Right lobe of liver (tissue), 6 donors: ENCODE measurements at regions of chr6 and their contacts with region 1.

Region 1: DNA sequence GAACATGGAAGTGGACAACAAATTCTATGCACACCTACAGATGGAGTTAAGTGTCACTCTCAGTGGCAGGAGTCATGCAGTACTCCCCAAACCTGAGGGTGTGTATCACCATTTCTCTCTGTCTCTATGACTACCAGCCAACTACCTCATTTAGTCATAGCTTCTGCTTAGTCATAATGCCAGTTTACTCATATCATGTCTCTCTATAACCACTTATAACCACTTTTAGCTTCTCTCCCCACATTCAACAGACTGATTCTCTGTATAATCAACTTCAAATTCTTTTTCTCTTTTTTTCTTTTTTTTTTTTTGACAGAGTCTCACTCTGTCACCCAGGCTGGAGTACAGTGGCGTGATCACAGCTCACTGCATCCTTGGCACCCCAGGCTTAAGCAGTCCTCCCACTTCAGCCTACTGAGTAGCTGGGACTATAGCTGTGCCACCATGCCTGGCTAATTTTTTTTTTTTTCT is 13.8 kb upstream of the GTF3C6 start:
- DNase-seq: no peak
- ATAC-seq: peak in 3 of 4 donors; percentile 12 to 87 (median 38)
- H3K4me3 ChIP-seq: no peak overlapping the region
- H3K27ac ChIP-seq: no peak overlapping the region
- H3K4me1 ChIP-seq: no peaks in the 10 kb centered on the region
- H3K27me3 ChIP-seq: no peaks in the 10 kb centered on the region
- CTCF ChIP-seq: no peak
- POLR2A ChIP-seq: no peak

Region 2: DNA sequence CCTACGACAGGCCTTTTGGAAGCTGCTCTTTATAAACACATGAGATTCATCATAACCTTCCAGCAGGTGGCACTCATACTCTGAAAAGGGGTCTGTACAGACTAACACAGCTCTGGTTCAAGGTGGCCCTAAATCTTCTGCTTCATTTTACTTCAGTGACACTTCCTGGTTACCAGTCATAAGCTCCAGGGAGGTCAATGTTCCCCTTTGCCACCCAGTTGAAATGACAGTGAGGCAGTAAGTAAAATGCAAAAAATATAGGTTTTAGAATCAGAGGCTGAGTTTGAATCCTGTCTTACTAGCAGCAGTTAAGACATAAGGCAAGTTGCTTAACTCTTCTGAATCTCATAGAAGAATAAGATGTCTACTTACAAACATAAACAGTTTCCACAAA is 262.3 kb before region 1 on chr6:
- intact Hi-C with region 1: loop called in 1 of 2 experiments (anchors 5 kb)
- DNase-seq: peak in 1 of 3 donors; percentile 74
- ATAC-seq: peak; percentile 91 to 96 (median 94)
- H3K4me3 ChIP-seq: no peak overlapping the region
- H3K27ac ChIP-seq: peak overlapping the region in 2 of 3 donors; percentile 68 to 88
- H3K4me1 ChIP-seq: peaks cover 0 to 18% (median 6%) of the 10 kb centered on the region in 4 donors
- H3K27me3 ChIP-seq: no peaks in the 10 kb centered on the region
- CTCF ChIP-seq: peak; percentile 71 to 89 (median 74)
- POLR2A ChIP-seq: no peak

Region 3: DNA sequence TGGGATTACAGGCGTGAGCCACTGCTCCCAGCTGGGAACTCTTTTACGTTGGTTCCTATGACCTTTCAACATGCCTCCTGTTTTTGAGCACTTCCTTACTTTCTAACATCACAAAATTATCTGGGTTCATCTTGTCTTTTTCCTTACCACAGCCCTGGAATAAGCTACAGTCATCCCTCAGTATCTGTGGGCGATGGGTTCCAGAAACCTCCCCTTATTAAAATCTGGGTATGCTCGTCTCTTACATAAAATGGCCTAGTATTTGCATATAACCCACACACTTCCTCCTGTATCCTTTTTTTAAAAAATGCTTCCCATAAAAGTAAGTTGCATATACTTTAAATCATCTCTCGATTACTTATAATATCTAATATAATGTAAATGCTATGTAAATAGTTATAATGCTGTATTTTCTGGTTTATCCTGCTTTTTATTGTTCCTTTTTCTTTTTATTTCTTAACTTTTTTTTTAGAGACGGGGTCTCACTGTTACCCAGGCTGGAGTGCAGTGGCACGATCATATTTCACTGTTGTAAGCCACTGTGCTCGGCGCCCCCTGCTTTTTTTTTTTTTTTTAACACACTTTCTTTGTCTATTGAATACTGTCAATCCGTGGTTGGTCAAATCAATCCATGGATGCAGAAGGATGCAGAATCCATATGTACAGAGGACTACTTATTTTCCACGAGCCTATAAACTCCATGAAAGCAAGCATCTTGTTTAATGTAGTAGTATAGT is 46.3 kb after region 1 on chr6:
- intact Hi-C with region 1: no loop called
- DNase-seq: no peak
- ATAC-seq: no peak
- H3K4me3 ChIP-seq: no peak overlapping the region
- H3K27ac ChIP-seq: no peak overlapping the region
- H3K4me1 ChIP-seq: no peaks in the 10 kb centered on the region
- H3K27me3 ChIP-seq: no peaks in the 10 kb centered on the region
- CTCF ChIP-seq: no peak
- POLR2A ChIP-seq: no peak